Activated CD8-positive, alpha-beta T cell treated with anti-CD3 and anti-CD28 coated beads for 36 hours (primary cell): ENCODE measurements at regions of chr13 and their contacts with region 1.

Region 1: GRCh38 chr13:25114220-25114619 is 18.3 kb downstream of the PABPC3 start:
- DNase-seq: peak; percentile 80
- ATAC-seq: peak; percentile 92
- H3K4me3 Mint-ChIP-seq: no peak overlapping the region
- H3K27ac Mint-ChIP-seq: no peak overlapping the region
- H3K4me1 Mint-ChIP-seq: no peaks in the 10 kb centered on the region
- H3K27me3 Mint-ChIP-seq: peaks cover 8% of the 10 kb centered on the region
- CTCF ChIP-seq: peak; percentile 90

Region 2: GRCh38 chr13:24995226-24995804 is 118.9 kb before region 1 on chr13:
- CTCF ChIA-PET with region 1: interaction called, 11 read pairs
- POLR2A ChIA-PET with region 1: no interaction called
- intact Hi-C with region 1: no loop called
- DNase-seq: peak; percentile 76
- ATAC-seq: peak; percentile 83
- H3K4me3 Mint-ChIP-seq: no peak overlapping the region
- H3K27ac Mint-ChIP-seq: no peak overlapping the region
- H3K4me1 Mint-ChIP-seq: peaks cover 3% of the 10 kb centered on the region
- H3K27me3 Mint-ChIP-seq: peaks cover 21% of the 10 kb centered on the region
- CTCF ChIP-seq: peak; percentile 83

Region 3: GRCh38 chr13:25001476-25002206 is 112.6 kb before region 1 on chr13:
- CTCF ChIA-PET with region 1: interaction called, 4 read pairs
- POLR2A ChIA-PET with region 1: no interaction called
- intact Hi-C with region 1: loop called (anchors 5 kb)
- DNase-seq: no peak
- ATAC-seq: no peak
- H3K4me3 Mint-ChIP-seq: no peak overlapping the region
- H3K27ac Mint-ChIP-seq: no peak overlapping the region
- H3K4me1 Mint-ChIP-seq: peaks cover 3% of the 10 kb centered on the region
- H3K27me3 Mint-ChIP-seq: peaks cover 26% of the 10 kb centered on the region
- CTCF ChIP-seq: no peak

Region 4: GRCh38 chr13:25085125-25085742 is 29.0 kb before region 1 on chr13:
- CTCF ChIA-PET with region 1: interaction called, 24 read pairs
- POLR2A ChIA-PET with region 1: no interaction called
- intact Hi-C with region 1: no loop called
- DNase-seq: peak; percentile 34
- ATAC-seq: no peak
- H3K4me3 Mint-ChIP-seq: no peak overlapping the region
- H3K27ac Mint-ChIP-seq: no peak overlapping the region
- H3K4me1 Mint-ChIP-seq: no peaks in the 10 kb centered on the region
- H3K27me3 Mint-ChIP-seq: peaks cover 5% of the 10 kb centered on the region
- CTCF ChIP-seq: peak; percentile 54

Region 5: GRCh38 chr13:25095862-25096453 is 18.3 kb before region 1 on chr13 and contains the start of gene PABPC3:
- CTCF ChIA-PET with region 1: interaction called, 25 read pairs
- POLR2A ChIA-PET with region 1: no interaction called
- intact Hi-C with region 1: no loop called
- DNase-seq: peak; percentile 42
- ATAC-seq: peak; percentile 27
- H3K4me3 Mint-ChIP-seq: peak within 1 kb of the TSS; percentile 30
- H3K27ac Mint-ChIP-seq: no peak within 1 kb of the TSS
- H3K4me1 Mint-ChIP-seq: no peaks in the 10 kb centered on the region
- H3K27me3 Mint-ChIP-seq: peaks cover 40% of the 10 kb centered on the region
- CTCF ChIP-seq: no peak
- total RNA-seq, gene PABPC3: 1.8 to 1.9 TPM

Region 6: GRCh38 chr13:25103711-25104110 is 10.5 kb before region 1 on chr13:
- CTCF ChIA-PET with region 1: interaction called, 25 read pairs
- POLR2A ChIA-PET with region 1: no interaction called
- intact Hi-C with region 1: no loop called
- DNase-seq: no peak
- ATAC-seq: no peak
- H3K4me3 Mint-ChIP-seq: no peak overlapping the region
- H3K27ac Mint-ChIP-seq: no peak overlapping the region
- H3K4me1 Mint-ChIP-seq: no peaks in the 10 kb centered on the region
- H3K27me3 Mint-ChIP-seq: peaks cover 8% of the 10 kb centered on the region
- CTCF ChIP-seq: no peak

Region 7: GRCh38 chr13:25958986-25959385 is 844.8 kb after region 1 on chr13:
- CTCF ChIA-PET with region 1: no interaction called
- POLR2A ChIA-PET with region 1: no interaction called
- intact Hi-C with region 1: no loop called
- DNase-seq: no peak
- ATAC-seq: no peak
- H3K4me3 Mint-ChIP-seq: no peak overlapping the region
- H3K27ac Mint-ChIP-seq: no peak overlapping the region
- H3K4me1 Mint-ChIP-seq: peaks cover 17% of the 10 kb centered on the region
- H3K27me3 Mint-ChIP-seq: no peaks in the 10 kb centered on the region
- CTCF ChIP-seq: no peak